Gastrocnemius medialis (tissue), 4 donors: ENCODE measurements at regions of chr13 and their contacts with region 1.

Region 1: DNA sequence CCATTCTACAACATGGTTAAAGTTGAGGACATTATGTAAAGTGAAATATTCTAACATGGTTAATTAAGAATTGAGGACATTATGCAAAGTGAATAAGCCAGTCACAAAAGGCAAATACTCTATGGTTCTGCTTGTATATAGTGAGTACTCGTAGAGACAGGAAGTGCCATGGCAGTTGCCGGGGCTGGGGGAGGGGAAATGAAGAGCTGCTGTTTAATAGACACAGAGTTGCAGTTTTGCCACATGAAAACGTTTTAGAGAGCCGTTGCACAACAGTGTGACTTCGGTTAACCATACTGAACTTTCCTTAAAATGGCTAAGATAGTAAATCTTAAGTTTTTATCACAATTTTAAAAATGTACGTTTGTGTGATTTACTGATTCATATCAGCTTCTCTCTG is 176.9 kb downstream of the SHISA2 start:
- DNase-seq: no peak
- ATAC-seq: no peak
- H3K4me3 ChIP-seq: no peak overlapping the region
- H3K27ac ChIP-seq: no peak overlapping the region
- H3K4me1 ChIP-seq: peaks cover 11 to 21% of the 10 kb centered on the region in 2 donors
- H3K27me3 ChIP-seq: no peaks in the 10 kb centered on the region
- CTCF ChIP-seq: no peak
- POLR2A ChIP-seq: no peak

Region 2: DNA sequence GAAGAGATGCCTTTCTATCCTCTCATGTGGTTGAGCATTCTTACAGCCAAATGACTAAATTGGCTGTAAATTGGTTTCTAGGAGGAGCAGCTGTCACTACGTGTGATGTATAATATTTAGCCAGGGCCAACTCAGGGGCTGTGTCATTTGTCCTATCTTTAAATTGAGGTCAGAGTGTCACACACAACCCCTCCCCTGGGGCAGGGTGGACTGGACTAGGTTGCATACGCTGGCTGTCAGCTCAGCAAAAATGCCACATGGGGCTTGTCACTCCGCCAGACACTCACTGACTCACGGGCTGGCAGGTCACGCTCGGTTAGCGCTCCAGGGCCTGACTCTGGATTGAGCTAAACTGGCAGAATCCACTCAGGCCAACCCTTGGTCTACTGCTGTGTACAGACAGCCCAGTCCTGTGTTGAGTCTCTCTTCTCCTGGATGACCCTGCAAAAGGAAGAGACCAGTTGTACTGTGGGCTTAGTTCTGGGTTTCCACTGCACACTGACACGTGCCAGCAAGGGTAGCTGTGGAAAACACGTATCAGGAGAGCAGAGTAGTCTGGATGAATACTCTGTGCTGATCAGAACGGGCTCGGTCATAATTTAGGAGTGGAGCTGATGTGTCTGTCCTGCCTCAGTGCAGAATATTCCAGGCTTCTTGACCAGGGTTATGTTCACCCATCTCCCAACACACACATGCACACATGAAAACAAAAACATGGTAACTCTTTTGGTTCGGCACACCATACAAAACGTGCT is 147.8 kb after region 1 on chr13:
- in situ Hi-C with region 1: no loop called
- intact Hi-C with region 1: loop called (anchors 1 kb)
- DNase-seq: peak; percentile 90 to 92
- ATAC-seq: peak; percentile 92 to 94
- H3K4me3 ChIP-seq: no peak overlapping the region
- H3K27ac ChIP-seq: peak overlapping the region; percentile 70 to 83 (median 74)
- H3K4me1 ChIP-seq: peaks cover 29 to 37% of the 10 kb centered on the region in 2 donors
- H3K27me3 ChIP-seq: no peaks in the 10 kb centered on the region
- CTCF ChIP-seq: no peak
- POLR2A ChIP-seq: no peak